ENCODE measurements at regions of chr1 and their contacts with region 1.

Region 1: DNA sequence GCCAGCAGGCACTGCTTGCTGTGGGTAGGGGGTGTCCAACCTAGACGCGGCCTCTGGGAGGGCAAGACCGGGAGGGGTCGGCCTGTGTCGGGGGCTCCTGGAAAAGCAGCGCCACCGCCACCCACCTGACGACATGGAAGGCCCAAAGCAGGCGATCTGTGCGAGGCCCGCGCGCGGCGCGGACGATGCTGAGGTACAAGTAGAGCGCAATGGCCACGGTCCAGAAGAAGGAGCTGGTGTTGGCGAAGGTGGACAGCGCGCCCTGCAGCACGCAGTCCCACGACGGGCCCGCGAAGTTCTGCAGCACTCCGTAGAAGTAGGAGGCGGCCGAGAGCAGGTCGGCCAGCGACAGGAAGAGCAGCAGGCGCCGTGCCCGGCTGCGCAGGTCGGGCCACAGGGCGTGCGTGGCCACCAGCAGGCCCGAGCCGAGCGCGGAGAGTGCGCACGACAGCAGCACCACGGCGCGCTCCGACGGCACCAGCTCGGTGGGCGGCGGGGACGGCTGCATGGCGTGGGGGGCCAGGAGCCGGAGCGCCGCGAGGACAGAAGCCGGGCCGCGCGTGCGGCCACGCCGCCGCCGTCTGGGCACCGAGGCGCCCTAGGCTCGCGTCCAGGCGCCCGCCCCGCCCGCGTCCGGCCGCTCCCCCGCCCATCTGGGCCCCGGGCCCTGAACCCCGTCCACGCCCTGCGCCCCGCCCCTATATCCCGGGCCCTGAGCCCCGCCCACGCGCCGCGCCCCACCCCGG is at the start of gene GPR157:
- DNase-seq: peak; percentile 53 to 82 (median 70)
- ATAC-seq: peak; percentile 95
- H3K4me3 ChIP-seq: peak within 1 kb of the TSS; percentile 67
- H3K4me3 Mint-ChIP-seq: peak within 1 kb of the TSS; percentile 85 to 95 (median 90)
- H3K27ac ChIP-seq: peak within 1 kb of the TSS; percentile 67
- H3K27ac Mint-ChIP-seq: peak within 1 kb of the TSS; percentile 59 to 94 (median 87)
- H3K4me1 ChIP-seq: peaks cover 8 to 24% of the 10 kb centered on the region in 2 donors
- H3K4me1 Mint-ChIP-seq: peaks cover 19 to 40% (median 32%) of the 10 kb centered on the region in 7 donors
- H3K27me3 ChIP-seq: no peaks in the 10 kb centered on the region
- H3K27me3 Mint-ChIP-seq: peaks cover 0 to 25% (median 0%) of the 10 kb centered on the region in 5 donors
- total RNA-seq, gene GPR157: 4.0 to 14.1 (median 5.9) TPM

Region 2: GRCh38 chr1:8169364-8170058 is 959.2 kb before region 1 on chr1:
- CTCF ChIA-PET with region 1: no interaction called
- POLR2A ChIA-PET with region 1: no interaction called
- intact Hi-C with region 1: no loop called
- DNase-seq: peak in 7 of 9 donors; percentile 55 to 81 (median 72)
- ATAC-seq: peak; percentile 92
- H3K4me3 ChIP-seq: peak overlapping the region; percentile 26
- H3K4me3 Mint-ChIP-seq: peak overlapping the region; percentile 17 to 78 (median 69)
- H3K27ac ChIP-seq: peak overlapping the region; percentile 55
- H3K27ac Mint-ChIP-seq: peak overlapping the region; percentile 91 to 98 (median 97)
- H3K4me1 ChIP-seq: peaks cover 19 to 36% of the 10 kb centered on the region in 2 donors
- H3K4me1 Mint-ChIP-seq: peaks cover 16 to 59% (median 34%) of the 10 kb centered on the region in 7 donors
- H3K27me3 ChIP-seq: no peaks in the 10 kb centered on the region
- H3K27me3 Mint-ChIP-seq: no peaks in the 10 kb centered on the region

Region 3: DNA sequence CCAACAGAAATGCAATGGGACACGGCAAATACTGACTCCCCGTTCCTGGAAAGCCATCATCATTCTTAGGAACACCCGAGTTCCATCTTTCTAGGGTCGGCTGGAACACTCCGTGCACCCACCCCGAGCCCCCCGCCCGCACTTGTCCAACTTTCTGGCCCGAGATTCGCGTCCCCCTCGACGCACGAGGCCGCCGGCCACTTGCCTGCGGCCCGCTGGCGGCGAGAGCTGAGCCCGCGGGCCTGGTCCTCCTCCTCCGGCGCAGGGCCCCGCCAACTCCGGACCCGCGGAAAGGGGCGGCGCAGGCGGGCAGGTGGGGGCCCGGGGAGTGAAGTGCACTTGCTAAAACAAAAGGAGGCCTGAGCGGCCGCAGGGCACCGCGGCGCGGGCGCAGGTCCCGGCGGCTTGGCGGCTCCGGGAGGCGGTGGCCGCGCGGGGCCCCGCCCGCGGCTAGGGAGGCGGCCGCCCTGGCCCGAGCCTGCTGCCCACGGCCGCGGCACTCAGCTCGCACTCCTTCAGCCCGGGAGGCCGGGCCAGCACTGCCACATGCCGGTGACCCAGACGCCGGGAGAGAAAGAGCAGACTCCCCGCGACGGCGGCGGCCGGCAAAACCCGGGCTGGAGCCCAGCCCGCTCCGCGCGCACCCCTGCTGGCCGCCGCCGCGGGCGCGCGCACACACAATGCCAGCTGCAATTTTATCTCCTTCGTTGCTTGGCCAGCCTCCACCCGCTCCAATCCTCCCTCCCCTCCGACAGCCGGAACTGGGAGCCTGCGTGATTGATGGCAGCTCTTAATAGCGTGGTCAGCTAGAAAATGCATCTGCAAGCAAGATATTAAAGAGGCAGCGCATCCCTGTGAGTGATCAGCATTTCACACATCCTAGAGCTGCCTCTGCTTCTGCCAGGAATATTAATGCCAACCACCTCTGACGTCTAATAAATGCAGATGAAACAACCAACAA is 425.6 kb before region 1 on chr1:
- CTCF ChIA-PET with region 1: no interaction called
- POLR2A ChIA-PET with region 1: no interaction called
- intact Hi-C with region 1: loop called in 1 of 2 experiments (anchors 10 kb)
- DNase-seq: peak in 7 of 9 donors; percentile 22 to 83 (median 40)
- ATAC-seq: peak; percentile 72
- H3K4me3 ChIP-seq: peak overlapping the region; percentile 28
- H3K4me3 Mint-ChIP-seq: peak overlapping the region; percentile 79 to 92 (median 86)
- H3K27ac ChIP-seq: no peak overlapping the region
- H3K27ac Mint-ChIP-seq: peak overlapping the region in 6 of 9 donors; percentile 8 to 89 (median 48)
- H3K4me1 ChIP-seq: peaks cover 19 to 23% of the 10 kb centered on the region in 2 donors
- H3K4me1 Mint-ChIP-seq: peaks cover 19 to 53% (median 30%) of the 10 kb centered on the region in 7 donors
- H3K27me3 ChIP-seq: peaks cover 3 to 27% of the 10 kb centered on the region in 2 donors
- H3K27me3 Mint-ChIP-seq: peaks cover 9 to 56% (median 54%) of the 10 kb centered on the region in 5 donors

Region 4: DNA sequence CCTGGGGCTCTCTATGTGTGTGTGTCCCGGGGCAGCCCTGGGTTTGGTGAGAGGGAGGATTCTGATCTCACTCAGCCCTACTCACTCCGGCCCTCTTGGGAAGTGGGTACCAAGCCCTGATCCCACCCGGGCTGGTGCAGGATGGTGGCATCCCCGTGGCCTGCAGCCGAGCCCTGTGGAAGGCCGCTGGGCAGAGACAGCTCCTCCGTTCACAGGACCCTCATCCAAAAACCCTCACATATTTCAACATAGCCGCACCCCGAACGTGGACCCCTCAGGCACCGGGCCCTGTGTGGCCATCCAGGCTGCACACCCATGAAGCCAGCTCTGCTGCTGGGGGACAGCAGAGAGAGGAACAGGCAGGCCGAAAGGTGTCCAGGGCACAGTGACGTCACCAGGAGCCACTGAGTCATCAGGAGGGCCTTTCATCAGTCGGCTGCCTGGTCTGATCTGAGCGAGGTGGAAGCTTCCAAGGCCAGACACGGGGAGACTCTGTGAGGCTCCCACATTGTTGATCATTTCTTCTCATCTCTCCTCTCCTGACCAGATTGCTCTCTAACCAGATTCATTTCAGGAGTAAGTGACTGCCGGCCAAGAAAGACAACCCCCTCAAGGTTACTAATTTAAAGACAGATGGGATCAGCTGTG is 16.5 kb after region 1 on chr1:
- CTCF ChIA-PET with region 1: interaction called, 6 read pairs
- POLR2A ChIA-PET with region 1: interaction called, 3 read pairs
- intact Hi-C with region 1: loop called in 1 of 2 experiments (anchors 2 kb)
- DNase-seq: no peak
- ATAC-seq: no peak
- H3K4me3 ChIP-seq: no peak overlapping the region
- H3K4me3 Mint-ChIP-seq: no peak overlapping the region
- H3K27ac ChIP-seq: no peak overlapping the region
- H3K27ac Mint-ChIP-seq: no peak overlapping the region
- H3K4me1 ChIP-seq: no peaks in the 10 kb centered on the region
- H3K4me1 Mint-ChIP-seq: peaks cover 0 to 7% (median 4%) of the 10 kb centered on the region in 7 donors
- H3K27me3 ChIP-seq: no peaks in the 10 kb centered on the region
- H3K27me3 Mint-ChIP-seq: no peaks in the 10 kb centered on the region

Region 5: DNA sequence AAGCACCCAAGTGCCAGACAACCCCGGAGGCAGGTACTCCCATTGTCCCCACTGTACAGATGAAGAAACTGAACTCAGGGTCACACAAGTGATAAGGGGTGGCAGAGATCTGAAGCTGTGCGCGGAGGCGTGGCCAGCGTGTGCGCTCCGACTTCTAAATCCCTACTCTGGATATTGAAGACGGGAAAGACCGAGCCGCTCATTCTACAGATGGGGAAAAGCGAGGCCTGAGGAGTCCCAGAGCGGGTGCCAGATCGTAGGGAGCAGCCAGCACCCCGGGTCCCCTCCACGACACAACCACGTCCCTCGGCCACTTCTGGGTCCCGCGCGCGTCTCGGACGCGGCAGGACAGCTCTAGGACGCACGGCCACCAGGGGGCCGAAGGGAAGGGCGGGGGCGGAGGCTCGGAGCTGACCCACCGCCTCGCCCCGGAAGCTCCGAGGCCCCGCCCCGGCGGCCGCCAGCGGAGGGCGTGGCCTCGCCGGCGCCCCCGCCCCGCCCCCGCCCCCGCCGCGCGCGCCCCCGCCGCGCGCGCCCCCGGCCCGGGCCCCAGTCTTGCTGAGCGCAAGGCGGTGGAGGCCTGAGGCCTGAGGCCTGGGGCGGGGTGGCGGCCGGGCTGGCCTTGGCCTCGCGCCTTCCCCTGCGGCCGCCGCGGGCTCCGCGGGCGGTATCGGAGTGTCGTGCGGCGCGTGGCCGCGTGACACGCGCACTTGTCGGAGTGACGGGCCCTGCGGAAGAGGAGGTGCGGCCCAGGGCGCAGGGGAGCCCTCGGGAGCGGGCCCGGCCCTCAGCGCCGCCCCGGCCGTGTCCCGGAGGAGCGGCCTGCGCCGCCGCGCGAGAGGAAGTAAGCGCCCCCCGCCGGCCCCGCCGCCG is 105.8 kb after region 1 on chr1 and contains the start of gene H6PD:
- CTCF ChIA-PET with region 1: no interaction called
- POLR2A ChIA-PET with region 1: interaction called, 4 read pairs
- intact Hi-C with region 1: loop called (anchors 1 kb)
- DNase-seq: peak; percentile 60 to 88 (median 74)
- ATAC-seq: peak; percentile 88
- H3K4me3 ChIP-seq: peak within 1 kb of the TSS; percentile 74
- H3K4me3 Mint-ChIP-seq: peak within 1 kb of the TSS; percentile 83 to 97 (median 96)
- H3K27ac ChIP-seq: peak within 1 kb of the TSS; percentile 86
- H3K27ac Mint-ChIP-seq: peak within 1 kb of the TSS; percentile 91 to 99 (median 98)
- H3K4me1 ChIP-seq: peaks cover 14 to 23% of the 10 kb centered on the region in 2 donors
- H3K4me1 Mint-ChIP-seq: peaks cover 19 to 44% (median 36%) of the 10 kb centered on the region in 7 donors
- H3K27me3 ChIP-seq: no peaks in the 10 kb centered on the region
- H3K27me3 Mint-ChIP-seq: no peaks in the 10 kb centered on the region
- total RNA-seq, gene H6PD: 18.6 to 27.6 (median 19.8) TPM

Region 6: GRCh38 chr1:9823943-9824701 is 695.4 kb after region 1 on chr1 and contains the start of gene CLSTN1:
- CTCF ChIA-PET with region 1: no interaction called
- POLR2A ChIA-PET with region 1: no interaction called
- intact Hi-C with region 1: loop called in 1 of 2 experiments (anchors 2 kb)
- DNase-seq: peak; percentile 73 to 88 (median 84)
- ATAC-seq: peak; percentile 86
- H3K4me3 ChIP-seq: peak within 1 kb of the TSS; percentile 82
- H3K4me3 Mint-ChIP-seq: peak within 1 kb of the TSS; percentile 95 to 99 (median 98)
- H3K27ac ChIP-seq: peak within 1 kb of the TSS; percentile 68
- H3K27ac Mint-ChIP-seq: peak within 1 kb of the TSS; percentile 80 to 97 (median 93)
- H3K4me1 ChIP-seq: peaks cover 24 to 34% of the 10 kb centered on the region in 2 donors
- H3K4me1 Mint-ChIP-seq: peaks cover 31 to 52% (median 46%) of the 10 kb centered on the region in 7 donors
- H3K27me3 ChIP-seq: no peaks in the 10 kb centered on the region
- H3K27me3 Mint-ChIP-seq: peaks cover 0 to 3% (median 0%) of the 10 kb centered on the region in 5 donors
- total RNA-seq, gene CLSTN1: 68.6 to 116 (median 85.6) TPM

Measured in naive thymus-derived CD4-positive, alpha-beta T cell (primary cell).